Activated B cell treated with CpG ODN at 0.5 μM for 24 hours (primary cell): ENCODE measurements at regions of chr2 and their contacts with region 1.

Region 1: DNA sequence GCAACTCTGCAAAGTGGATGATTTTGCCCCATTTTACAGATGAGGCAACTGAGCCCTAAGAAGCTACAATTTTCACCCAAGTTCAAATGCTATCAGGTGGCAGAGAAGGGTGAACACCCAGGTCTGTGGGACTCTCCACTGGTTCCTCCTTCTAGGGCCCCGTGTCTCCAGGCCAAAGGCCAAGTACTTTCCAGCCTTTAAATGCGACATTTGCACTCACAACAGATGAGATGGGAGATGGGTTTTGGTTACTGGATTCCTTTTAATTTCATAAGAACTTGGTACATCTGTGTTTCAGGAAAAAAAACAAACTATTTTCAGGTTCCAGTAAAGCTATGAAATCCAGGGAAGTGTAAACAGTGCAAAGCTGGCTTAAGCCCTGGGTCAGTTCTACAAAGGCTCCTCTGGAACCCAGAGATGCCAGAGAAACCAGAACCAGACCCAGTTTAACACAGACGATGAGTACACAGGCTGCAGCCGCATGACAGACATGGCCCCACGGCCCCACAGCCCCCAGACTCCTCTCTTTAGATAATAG is 361.7 kb downstream of the ANAPC1 start:
- DNase-seq: no peak
- ATAC-seq: no peak
- H3K4me3 Mint-ChIP-seq: no peak overlapping the region
- H3K27ac Mint-ChIP-seq: no peak overlapping the region
- H3K4me1 Mint-ChIP-seq: no peaks in the 10 kb centered on the region
- H3K27me3 Mint-ChIP-seq: no peaks in the 10 kb centered on the region
- CTCF ChIP-seq: no peak

Region 2: DNA sequence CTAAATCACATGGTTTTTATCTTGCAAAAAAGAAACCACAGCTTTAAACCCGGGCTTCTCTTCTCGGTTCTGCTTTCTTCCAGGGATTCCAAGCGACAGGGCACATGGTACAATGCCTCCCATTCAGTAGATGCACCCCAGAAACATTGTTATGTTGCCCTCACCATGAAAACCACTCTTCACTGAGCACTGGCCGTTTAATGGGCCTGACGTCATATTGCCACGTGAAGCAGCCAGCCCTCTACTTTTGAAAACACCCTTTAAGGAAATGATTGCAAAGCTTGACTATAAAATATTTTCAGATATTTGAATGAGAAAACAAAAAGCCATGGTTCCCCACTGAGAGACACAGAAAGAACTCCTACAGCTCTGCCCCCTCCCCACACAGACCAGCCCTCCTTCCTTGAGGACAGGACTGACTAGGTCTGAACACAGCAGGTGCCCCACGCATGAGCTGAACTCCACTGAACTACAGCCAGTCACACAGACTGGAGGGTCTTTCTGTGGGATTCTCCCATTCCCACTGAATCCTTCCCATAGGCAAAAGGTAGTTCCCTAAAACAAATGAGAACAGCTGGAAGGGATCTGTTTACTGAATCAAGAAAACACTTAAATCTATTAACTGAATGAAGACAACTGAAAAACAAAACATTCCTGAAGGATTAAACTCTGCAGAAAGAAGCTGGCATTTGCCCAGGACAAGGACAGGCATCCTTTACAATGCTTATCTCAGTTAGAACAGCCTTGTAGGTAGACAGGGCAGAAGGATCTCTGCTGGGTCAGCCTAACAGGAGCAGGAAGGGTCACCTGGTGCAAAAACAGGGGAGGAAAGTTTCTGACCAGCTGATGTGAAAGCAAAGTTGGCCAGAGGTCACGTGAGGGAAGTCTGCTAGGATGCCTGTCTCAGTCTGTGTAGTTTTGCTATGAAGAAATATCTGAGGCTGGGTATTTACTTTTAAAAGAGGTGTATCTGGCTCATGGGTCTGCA is 12.8 kb after region 1 on chr2:
- CTCF ChIA-PET with region 1: no interaction called
- POLR2A ChIA-PET with region 1: no interaction called
- intact Hi-C with region 1: no loop called
- DNase-seq: no peak
- ATAC-seq: peak; percentile 32
- H3K4me3 Mint-ChIP-seq: peak overlapping the region; percentile 56
- H3K27ac Mint-ChIP-seq: no peak overlapping the region
- H3K4me1 Mint-ChIP-seq: peaks cover 14% of the 10 kb centered on the region
- H3K27me3 Mint-ChIP-seq: peaks cover 1% of the 10 kb centered on the region
- CTCF ChIP-seq: no peak

Region 3: GRCh38 chr2:111654829-111655228 is 132.5 kb after region 1 on chr2:
- CTCF ChIA-PET with region 1: no interaction called
- POLR2A ChIA-PET with region 1: interaction called, 12 read pairs
- intact Hi-C with region 1: no loop called
- DNase-seq: no peak
- ATAC-seq: no peak
- H3K4me3 Mint-ChIP-seq: no peak overlapping the region
- H3K27ac Mint-ChIP-seq: no peak overlapping the region
- H3K4me1 Mint-ChIP-seq: peaks cover 10% of the 10 kb centered on the region
- H3K27me3 Mint-ChIP-seq: no peaks in the 10 kb centered on the region
- CTCF ChIP-seq: no peak